A673 (cell line): ENCODE measurements at regions of chr18 and their contacts with region 1.

Region 1: GRCh38 chr18:72772916-72773315 is 94.9 kb downstream of the NETO1 start:
- DNase-seq: no peak
- H3K4me3 ChIP-seq: no peak overlapping the region
- H3K27ac ChIP-seq: no peak overlapping the region
- H3K4me1 ChIP-seq: peaks cover 34% of the 10 kb centered on the region
- H3K27me3 ChIP-seq: no peaks in the 10 kb centered on the region
- CTCF ChIP-seq: no peak

Region 2: GRCh38 chr18:72727038-72727655 is 45.8 kb before region 1 on chr18:
- CTCF ChIA-PET with region 1: no interaction called
- POLR2A ChIA-PET with region 1: no interaction called
- intact Hi-C with region 1: loop called (anchors 2 kb)
- DNase-seq: no peak
- H3K4me3 ChIP-seq: no peak overlapping the region
- H3K27ac ChIP-seq: no peak overlapping the region
- H3K4me1 ChIP-seq: no peaks in the 10 kb centered on the region
- H3K27me3 ChIP-seq: no peaks in the 10 kb centered on the region
- CTCF ChIP-seq: no peak

Region 3: DNA sequence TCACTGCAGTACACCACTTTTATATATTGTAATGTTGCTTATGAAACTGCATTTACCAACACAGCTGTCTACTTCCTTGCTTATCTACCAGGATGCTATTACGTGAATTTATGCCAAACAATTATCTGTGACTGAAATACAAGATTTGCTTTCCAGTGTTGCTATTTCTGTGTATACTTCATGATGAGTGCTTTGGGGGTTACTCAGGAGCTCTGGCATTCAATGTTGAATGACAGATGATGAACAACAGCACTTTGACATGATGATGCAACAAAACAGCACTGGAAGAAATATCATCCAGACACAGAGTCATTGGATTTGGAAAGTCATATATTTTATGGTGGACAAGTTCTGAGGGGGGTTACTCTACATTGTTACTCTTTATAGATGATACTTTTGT is 30.9 kb before region 1 on chr18:
- CTCF ChIA-PET with region 1: no interaction called
- POLR2A ChIA-PET with region 1: no interaction called
- intact Hi-C with region 1: no loop called
- DNase-seq: no peak
- H3K4me3 ChIP-seq: no peak overlapping the region
- H3K27ac ChIP-seq: no peak overlapping the region
- H3K4me1 ChIP-seq: no peaks in the 10 kb centered on the region
- H3K27me3 ChIP-seq: peaks cover 3% of the 10 kb centered on the region
- CTCF ChIP-seq: no peak

Region 4: GRCh38 chr18:72866901-72867701 is 94.2 kb after region 1 on chr18:
- CTCF ChIA-PET with region 1: no interaction called
- POLR2A ChIA-PET with region 1: no interaction called
- intact Hi-C with region 1: loop called (anchors 5 kb)
- DNase-seq: peak; percentile 23
- H3K4me3 ChIP-seq: peak overlapping the region; percentile 51
- H3K27ac ChIP-seq: no peak overlapping the region
- H3K4me1 ChIP-seq: no peaks in the 10 kb centered on the region
- H3K27me3 ChIP-seq: peaks cover 37% of the 10 kb centered on the region
- CTCF ChIP-seq: no peak

Region 5: GRCh38 chr18:73214967-73215366 is 442.1 kb after region 1 on chr18:
- CTCF ChIA-PET with region 1: no interaction called
- POLR2A ChIA-PET with region 1: no interaction called
- intact Hi-C with region 1: no loop called
- DNase-seq: no peak
- H3K4me3 ChIP-seq: no peak overlapping the region
- H3K27ac ChIP-seq: no peak overlapping the region
- H3K4me1 ChIP-seq: no peaks in the 10 kb centered on the region
- H3K27me3 ChIP-seq: no peaks in the 10 kb centered on the region
- CTCF ChIP-seq: no peak